Posterior cingulate gyrus (tissue), 11 donors: ENCODE measurements at regions of chr6 and their contacts with region 1.

Region 1: DNA sequence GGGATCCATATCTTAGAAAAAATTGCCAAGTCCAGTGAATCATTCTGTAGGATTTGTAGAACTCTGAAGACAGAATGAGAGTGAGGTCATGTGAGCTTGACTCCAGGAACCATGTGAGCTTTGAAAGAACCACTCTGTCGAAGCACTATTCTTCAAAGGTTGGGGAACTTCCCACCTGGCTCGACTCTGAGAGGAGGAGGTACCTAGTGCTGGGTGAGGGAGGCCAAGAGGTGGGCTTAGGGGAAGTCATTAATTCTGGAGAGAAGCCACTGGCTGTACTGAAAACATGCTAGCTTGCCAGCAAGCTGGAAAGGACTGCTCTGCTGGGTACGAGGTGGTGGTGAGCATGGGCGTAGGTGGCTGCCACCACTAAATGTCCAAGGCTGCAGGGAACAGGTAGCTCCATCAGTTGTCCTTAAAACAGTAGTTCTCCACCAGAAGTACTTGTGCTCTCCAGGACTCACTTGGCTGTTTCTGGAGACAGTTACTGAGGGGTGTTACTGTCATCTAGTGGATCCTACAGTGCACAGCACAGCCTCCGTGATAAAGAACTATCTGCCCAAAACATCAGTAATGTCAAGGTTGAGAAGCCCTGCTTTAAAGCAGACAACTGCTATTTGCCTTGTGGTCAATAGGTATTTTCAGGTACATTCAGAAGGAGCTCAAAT is 34.7 kb upstream of the SYNJ2 start:
- DNase-seq: peak in 1 of 10 donors; percentile 80

Region 2: DNA sequence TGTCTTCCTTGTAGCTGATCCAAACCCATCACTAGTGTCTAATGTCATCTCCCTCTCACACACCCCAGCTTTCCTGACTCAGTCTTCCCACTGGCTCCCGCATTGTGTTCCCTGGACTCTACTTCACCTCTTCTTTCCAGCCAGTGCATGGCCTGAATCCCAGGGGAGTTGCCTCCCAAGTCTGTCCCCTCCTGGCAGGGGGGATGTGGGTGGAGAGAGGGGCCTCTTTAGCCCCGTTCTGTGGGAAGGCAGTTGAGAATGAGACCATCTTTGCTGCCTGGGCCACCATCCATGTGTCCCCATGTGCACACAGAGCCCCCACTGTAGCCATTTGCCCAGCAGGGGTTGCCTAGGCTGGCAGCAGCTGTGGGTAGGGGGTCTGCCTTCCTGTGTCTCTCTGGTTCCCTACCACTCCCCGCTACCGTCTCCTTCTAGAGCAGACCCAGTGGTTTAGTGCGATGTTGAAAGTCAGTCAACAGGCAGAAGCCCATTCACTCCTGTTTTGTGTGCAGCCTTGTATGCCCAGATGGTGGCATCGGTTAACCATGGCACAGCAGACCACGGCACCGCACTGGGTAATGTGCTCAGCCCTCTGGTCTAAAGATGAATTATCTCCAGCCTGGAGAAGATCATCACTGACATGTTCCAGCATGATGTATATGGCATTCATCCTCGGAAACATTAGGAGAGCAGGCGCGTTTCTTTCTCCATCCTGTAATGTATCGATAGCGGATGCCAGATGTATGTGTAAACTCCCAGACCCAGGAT is 302.8 kb before region 1 on chr6:
- intact Hi-C with region 1: loop called (anchors 10 kb)
- DNase-seq: peak in 5 of 10 donors; percentile 35 to 92 (median 52)

Region 3: DNA sequence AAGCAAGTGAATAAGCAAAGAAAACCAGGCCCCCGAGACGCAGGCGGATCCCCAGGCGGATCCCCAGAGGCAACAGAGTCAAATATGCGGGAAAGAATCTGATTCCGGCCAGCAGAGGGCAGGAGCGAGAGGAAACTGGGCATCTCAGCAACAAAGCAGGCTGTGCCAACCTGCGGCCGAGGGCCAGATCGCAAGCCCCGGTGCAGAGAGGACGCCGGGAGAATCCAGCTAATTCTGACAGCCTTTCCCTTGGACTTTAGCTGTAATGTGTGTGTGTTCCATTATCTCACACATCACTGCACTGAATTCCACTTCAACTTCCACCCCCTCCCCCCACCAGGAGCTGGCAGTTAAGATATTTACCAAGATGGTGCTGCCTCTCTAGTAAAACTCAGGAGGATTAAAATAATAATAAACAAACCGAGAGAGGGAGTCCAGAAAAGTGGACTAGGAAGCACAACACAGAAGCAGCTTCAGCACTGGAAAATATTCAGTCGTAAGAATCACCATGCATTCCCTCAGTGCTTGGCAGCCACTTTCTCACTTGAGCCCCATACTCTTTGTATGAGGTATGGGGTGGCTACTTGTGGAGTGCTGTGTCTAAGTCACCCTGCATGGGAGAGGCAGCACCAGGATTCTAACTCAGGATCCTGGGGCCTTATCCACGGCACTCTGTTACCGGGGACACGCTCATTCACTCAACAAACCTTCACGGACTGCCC is 190.1 kb before region 1 on chr6:
- intact Hi-C with region 1: loop called (anchors 1 kb)
- DNase-seq: peak; percentile 76 to 97 (median 92)

Region 4: DNA sequence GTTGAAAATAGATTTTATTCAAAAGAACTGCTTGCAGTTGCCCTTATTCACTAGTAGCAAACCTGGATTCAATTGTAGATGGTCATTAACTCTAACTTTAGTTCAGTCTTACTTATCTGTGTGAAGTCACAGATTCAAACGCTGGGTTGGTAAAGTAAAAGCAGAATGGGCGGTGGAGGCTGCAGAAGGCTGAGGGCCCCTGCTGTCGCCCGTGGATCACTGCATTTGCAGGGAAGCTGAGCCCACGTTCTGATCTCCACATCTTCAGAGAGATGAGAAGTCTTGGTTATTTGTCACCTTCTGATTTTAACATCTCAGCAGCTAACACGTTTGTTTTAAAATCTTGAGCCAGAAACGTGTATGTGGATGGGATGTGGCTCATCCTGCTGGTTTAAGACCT is 48.8 kb before region 1 on chr6:
- intact Hi-C with region 1: loop called (anchors 5 kb)
- DNase-seq: peak in 8 of 10 donors; percentile 46 to 96 (median 62)